Thyroid gland (tissue), 4 donors: ENCODE measurements at regions of chr5 and their contacts with region 1.

Region 1: DNA sequence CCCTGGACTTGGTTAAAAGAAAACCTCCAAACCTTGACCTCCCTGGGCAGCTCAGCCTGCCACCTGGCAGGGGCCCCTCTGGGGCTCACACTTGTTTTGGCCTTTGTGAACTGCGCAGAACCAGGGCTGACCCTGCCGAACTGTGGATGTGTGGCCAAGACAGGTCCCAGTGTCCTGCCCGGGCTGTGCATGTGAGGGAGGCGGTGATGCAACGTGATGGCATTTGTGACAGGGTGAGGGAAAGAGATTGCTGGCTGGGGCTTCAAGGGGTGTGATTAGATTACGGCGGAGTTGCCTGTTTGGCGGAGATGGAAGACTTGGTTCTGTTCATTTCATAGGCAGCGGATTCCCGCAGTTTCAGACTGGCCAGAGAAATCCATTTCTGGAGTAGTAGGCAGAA is 30.4 kb upstream of the NKX2-5 start:
- DNase-seq: no peak
- H3K4me3 ChIP-seq: no peak overlapping the region
- H3K27ac ChIP-seq: no peak overlapping the region
- H3K4me1 ChIP-seq: no peaks in the 10 kb centered on the region
- H3K27me3 ChIP-seq: no peaks in the 10 kb centered on the region
- CTCF ChIP-seq: no peak
- POLR2A ChIP-seq: no peak

Region 2: DNA sequence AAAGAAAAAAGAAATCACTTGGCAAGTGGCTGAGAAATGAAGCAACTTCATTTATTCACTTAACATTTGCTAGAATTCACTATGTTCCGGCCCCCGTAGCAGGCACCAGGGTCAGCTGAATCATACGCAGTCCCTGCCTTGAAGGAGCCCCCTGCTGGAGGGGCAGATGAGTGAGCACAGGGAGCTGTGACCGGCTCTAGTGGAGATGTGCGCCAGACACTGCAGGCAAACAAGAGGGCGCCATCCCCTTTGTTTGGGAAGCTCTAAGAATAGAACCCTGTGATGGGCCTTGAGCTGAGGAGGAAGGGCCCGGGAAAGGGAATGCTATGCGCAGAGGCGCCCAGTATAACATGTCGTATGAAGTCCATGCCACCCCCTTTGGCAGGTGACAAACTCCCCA is 326.4 kb before region 1 on chr5:
- intact Hi-C with region 1: no loop called
- DNase-seq: no peak
- H3K4me3 ChIP-seq: no peak overlapping the region
- H3K27ac ChIP-seq: no peak overlapping the region
- H3K4me1 ChIP-seq: peaks cover 0 to 8% of the 10 kb centered on the region in 2 donors
- H3K27me3 ChIP-seq: no peaks in the 10 kb centered on the region
- CTCF ChIP-seq: peak in 1 of 6 experiments; percentile 16
- POLR2A ChIP-seq: no peak

Region 3: DNA sequence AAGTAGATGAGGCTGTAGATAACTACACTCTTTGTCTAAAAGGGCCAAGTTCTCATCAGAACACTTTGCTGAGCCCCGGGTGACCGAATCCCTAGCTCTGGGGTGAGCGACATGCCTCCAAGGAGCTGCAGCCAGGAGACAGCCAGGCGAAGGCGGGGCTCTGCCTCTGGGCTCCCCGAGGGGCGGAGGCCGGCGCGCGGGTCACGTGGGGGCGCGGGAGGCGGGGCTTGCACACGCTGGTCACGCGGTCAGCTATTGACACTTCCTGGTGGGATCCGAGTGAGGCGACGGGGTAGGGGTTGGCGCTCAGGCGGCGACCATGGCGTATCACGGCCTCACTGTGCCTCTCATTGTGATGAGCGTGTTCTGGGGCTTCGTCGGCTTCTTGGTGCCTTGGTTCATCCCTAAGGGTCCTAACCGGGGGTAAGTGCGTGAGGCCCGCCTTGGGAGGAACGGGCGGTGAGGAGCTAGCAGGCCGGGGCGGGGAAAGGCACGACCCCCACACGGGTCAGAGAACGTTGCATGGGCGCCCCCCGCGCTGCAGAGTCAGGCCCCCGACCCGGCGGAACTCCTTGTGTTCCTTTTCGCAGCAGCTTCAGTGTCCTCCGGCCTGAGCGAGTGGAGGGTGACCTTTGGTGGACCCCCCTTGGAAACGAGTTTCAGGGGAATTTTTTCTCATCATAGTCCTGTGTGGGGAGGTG is 281.7 kb before region 1 on chr5 and contains the start of gene ATP6V0E1:
- intact Hi-C with region 1: no loop called
- DNase-seq: peak; percentile 98
- H3K4me3 ChIP-seq: peak within 1 kb of the TSS; percentile 77 to 87 (median 82)
- H3K27ac ChIP-seq: peak within 1 kb of the TSS; percentile 93 to 95 (median 94)
- H3K4me1 ChIP-seq: peaks cover 9 to 10% of the 10 kb centered on the region in 2 donors
- H3K27me3 ChIP-seq: no peaks in the 10 kb centered on the region
- CTCF ChIP-seq: no peak
- POLR2A ChIP-seq: peak in 1 of 2 donors; percentile 89
- total RNA-seq, gene ATP6V0E1: 170 to 254 (median 198) TPM

Region 4: GRCh38 chr5:173155912-173156311 is 109.5 kb before region 1 on chr5:
- intact Hi-C with region 1: loop called (anchors 10 kb)
- DNase-seq: no peak
- H3K4me3 ChIP-seq: no peak overlapping the region
- H3K27ac ChIP-seq: no peak overlapping the region
- H3K4me1 ChIP-seq: no peaks in the 10 kb centered on the region
- H3K27me3 ChIP-seq: no peaks in the 10 kb centered on the region
- CTCF ChIP-seq: no peak
- POLR2A ChIP-seq: no peak